ENCODE measurements at regions of chr3 and their contacts with region 1.

Region 1: GRCh38 chr3:62201438-62202035 is 171.8 kb downstream of the FEZF2 start:
- DNase-seq: peak; percentile 18
- H3K4me3 Mint-ChIP-seq: no peak overlapping the region
- H3K27ac Mint-ChIP-seq: no peak overlapping the region
- H3K4me1 Mint-ChIP-seq: no peaks in the 10 kb centered on the region
- H3K27me3 Mint-ChIP-seq: no peaks in the 10 kb centered on the region
- CTCF ChIP-seq: peak; percentile 24

Region 2: GRCh38 chr3:62332835-62333244 is 131.3 kb after region 1 on chr3:
- CTCF ChIA-PET with region 1: no interaction called
- intact Hi-C with region 1: loop called (anchors 2 kb)
- DNase-seq: peak; percentile 14
- H3K4me3 Mint-ChIP-seq: no peak overlapping the region
- H3K27ac Mint-ChIP-seq: no peak overlapping the region
- H3K4me1 Mint-ChIP-seq: no peaks in the 10 kb centered on the region
- H3K27me3 Mint-ChIP-seq: no peaks in the 10 kb centered on the region
- CTCF ChIP-seq: peak; percentile 12